ENCODE measurements at regions of chr6 and their contacts with region 1.

Region 1: GRCh38 chr6:39003072-39003471 is 45.5 kb upstream of the GLP1R start:
- DNase-seq: no peak
- H3K4me3 ChIP-seq: no peak overlapping the region
- H3K27ac ChIP-seq: no peak overlapping the region
- H3K4me1 ChIP-seq: no peaks in the 10 kb centered on the region
- H3K27me3 ChIP-seq: no peaks in the 10 kb centered on the region; a peak in 1 of 7 replicates
- CTCF ChIP-seq: peak in 2 of 3 experiments; percentile 72 to 80; a peak in 3 of 4 replicates
- EP300 ChIP-seq: no peak
- POLR2A ChIP-seq: no peak
- RAD21 ChIP-seq: peak; percentile 70 to 83

Region 2: DNA sequence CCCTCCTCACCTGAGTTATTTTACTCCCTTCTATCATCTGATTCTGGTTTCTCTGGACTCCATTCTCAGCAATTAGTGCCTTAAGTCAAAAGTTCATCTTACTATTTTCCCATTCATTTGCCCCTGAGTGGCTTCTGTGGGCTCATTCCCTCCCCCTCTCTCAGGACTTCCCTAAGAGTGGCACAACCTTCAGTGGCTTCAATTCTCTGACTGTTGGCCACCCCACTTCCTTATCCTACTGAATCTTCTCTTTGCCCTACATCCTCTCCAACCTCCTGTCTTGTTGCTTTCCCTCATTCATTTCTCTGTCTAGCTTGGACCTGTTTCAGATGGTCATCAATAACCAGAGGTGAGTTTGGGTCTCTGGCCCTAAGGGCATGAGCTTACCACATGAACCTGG is 15.6 kb before region 1 on chr6:
- CTCF ChIA-PET with region 1: interaction called, 17 read pairs
- POLR2A ChIA-PET with region 1: interaction called, 3 read pairs
- DNase-seq: no peak
- H3K4me3 ChIP-seq: no peak overlapping the region
- H3K27ac ChIP-seq: no peak overlapping the region
- H3K4me1 ChIP-seq: peaks cover under 1 to 7% (median 4%) of the 10 kb centered on the region in 4 experiments; a peak in 6 of 7 replicates
- H3K27me3 ChIP-seq: no peaks in the 10 kb centered on the region; a peak in 2 of 7 replicates
- CTCF ChIP-seq: no peak
- EP300 ChIP-seq: no peak
- POLR2A ChIP-seq: no peak
- RAD21 ChIP-seq: no peak

Region 3: DNA sequence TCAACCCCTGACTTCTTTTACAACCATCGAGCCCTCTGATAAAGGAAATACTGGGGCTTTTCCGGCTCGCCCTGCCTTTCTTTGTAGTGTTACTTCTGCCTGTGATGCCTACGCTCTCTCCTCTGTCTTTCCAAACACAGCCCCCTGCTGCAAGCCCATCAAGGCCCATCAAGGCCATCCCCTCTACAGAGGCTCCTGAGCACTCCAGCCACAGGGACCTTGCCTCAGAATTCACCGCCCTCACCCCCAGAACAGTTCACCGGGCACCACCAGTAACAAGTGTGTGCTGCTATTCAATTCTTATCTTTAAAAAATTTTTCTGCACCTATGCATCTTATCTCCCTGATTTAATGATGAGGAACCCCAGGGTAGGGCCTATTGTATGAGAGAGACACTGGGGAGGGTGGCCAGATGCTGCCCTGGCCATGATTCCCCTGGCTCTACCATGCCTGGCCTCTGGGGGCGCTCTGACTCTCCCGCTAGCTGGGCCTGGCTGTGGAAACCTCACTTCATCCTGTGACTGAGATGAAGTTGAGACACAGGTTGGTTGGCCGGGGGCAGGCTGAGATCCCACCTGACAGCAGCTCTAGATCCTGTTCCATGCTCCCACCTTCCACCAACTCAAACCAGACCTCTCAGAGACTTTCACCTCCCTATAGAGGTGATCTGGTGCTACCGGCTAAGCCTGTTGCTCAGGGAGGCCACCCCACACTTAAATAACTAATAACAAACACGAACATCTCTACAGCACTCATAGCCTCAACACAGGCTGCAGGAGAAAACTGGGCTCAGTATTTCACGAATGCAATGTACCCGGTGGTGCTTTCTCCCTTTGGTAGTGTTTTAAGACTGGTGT is 26.3 kb after region 1 on chr6:
- CTCF ChIA-PET with region 1: interaction called, 24 read pairs
- POLR2A ChIA-PET with region 1: interaction called, 3 read pairs
- DNase-seq: peak in 1 of 2 experiments; percentile 93
- H3K4me3 ChIP-seq: no peak overlapping the region
- H3K27ac ChIP-seq: no peak overlapping the region
- H3K4me1 ChIP-seq: peaks cover 0 to 4% (median 0%) of the 10 kb centered on the region in 4 experiments; a peak in 1 of 7 replicates
- H3K27me3 ChIP-seq: no peaks in the 10 kb centered on the region; a peak in 1 of 7 replicates
- CTCF ChIP-seq: peak; percentile 81 to 97 (median 97)
- EP300 ChIP-seq: no peak
- POLR2A ChIP-seq: no peak
- RAD21 ChIP-seq: peak; percentile 70 to 79

Region 4: GRCh38 chr6:39048481-39049399 is 45.7 kb after region 1 on chr6 and contains the start of gene GLP1R:
- CTCF ChIA-PET with region 1: interaction called, 20 read pairs
- POLR2A ChIA-PET with region 1: no interaction called
- DNase-seq: peak in 1 of 2 experiments; percentile 82
- H3K4me3 ChIP-seq: peak within 1 kb of the TSS; percentile 65 to 85 (median 72)
- H3K27ac ChIP-seq: no peak within 1 kb of the TSS
- H3K4me1 ChIP-seq: peaks cover 0 to 6% (median 4%) of the 10 kb centered on the region in 4 experiments; a peak in 5 of 7 replicates
- H3K27me3 ChIP-seq: peaks cover 3 to 39% (median 33%) of the 10 kb centered on the region in 4 experiments
- CTCF ChIP-seq: no peak
- EP300 ChIP-seq: no peak
- POLR2A ChIP-seq: no peak
- RAD21 ChIP-seq: no peak
- total RNA-seq, gene GLP1R: 2.6 and 3.0 TPM in 2 replicates

Region 5: DNA sequence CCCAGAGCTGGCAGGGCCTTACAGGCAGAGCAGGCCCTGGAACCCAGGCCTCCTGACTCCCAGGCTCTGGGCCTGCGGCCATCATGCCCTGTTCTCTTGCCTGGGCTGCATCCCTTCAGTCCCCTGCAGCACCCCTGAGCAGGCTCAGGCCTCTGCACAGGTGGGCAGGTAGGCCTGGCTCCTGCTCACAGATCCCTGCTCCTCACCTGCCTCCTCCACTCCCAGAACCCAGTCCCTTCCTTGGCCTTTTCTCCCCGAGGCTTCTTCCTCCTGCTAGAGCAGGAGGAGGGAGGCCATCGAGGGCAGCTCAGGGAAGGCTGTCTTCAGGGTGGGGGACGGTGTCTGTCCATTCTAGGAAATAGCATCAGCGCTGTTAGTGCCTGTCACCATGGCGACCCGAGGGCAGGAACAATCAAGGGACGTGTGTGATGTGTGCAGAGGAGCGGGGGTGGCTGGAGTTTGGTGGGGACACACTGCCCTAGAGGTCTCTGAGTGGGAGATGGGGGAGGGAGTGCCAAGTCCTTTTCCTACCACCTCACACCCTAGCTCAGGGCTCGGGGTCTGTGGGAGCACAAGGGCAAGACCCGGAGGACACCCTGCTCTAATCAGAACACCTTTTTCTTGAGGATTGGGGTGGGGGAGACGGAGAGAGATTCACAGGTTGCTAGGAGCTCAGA is 72.1 kb after region 1 on chr6:
- CTCF ChIA-PET with region 1: interaction called, 11 read pairs
- POLR2A ChIA-PET with region 1: no interaction called
- DNase-seq: no peak
- H3K4me3 ChIP-seq: no peak overlapping the region
- H3K27ac ChIP-seq: no peak overlapping the region
- H3K4me1 ChIP-seq: peaks cover 0 to 10% (median 0%) of the 10 kb centered on the region in 4 experiments; a peak in 3 of 7 replicates
- H3K27me3 ChIP-seq: 0 out of 7 replicates have a peak, but pooled peaks cover 0 to 5% (median 0%) of the 10 kb centered on the region in 4 experiments
- CTCF ChIP-seq: no peak
- EP300 ChIP-seq: no peak
- POLR2A ChIP-seq: no peak
- RAD21 ChIP-seq: no peak

Region 6: DNA sequence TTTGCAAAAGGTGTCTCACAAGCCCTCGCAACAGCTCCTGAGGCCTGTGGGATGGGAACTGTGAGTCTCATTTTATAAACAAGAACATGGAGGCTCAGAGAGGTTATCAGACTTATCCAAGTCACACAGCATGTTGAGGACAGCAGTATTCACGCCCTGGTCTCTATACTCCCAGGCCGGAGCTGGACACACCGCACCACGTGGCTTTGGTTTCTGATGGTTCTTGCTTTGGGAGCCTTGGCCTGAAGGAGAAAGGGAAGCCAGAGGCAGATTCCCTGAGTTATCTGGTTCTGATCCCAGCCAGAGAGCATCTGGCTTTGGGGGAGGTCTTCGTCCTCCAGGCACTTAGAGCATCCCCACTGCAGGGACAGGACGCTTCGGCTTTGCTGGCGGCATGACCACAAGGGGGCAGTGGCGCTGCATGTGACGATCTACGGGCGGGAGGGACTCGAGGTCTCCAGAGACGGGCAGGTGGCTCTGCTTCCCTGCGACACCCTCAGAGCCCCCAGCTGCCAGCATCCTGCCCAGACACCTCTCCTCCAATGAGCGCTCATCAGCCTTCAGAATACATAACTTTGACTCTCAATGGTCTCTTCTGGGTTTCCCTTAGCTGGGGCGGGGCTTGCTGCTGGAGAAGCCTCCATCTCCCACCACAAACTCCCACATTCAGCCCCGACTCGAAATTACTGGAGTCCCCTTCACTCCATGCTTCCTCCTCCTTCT is 163.3 kb after region 1 on chr6:
- CTCF ChIA-PET with region 1: interaction called, 27 read pairs
- POLR2A ChIA-PET with region 1: no interaction called
- DNase-seq: peak; percentile 79 to 99
- H3K4me3 ChIP-seq: no peak overlapping the region
- H3K27ac ChIP-seq: no peak overlapping the region
- H3K4me1 ChIP-seq: no peaks in the 10 kb centered on the region
- H3K27me3 ChIP-seq: no peaks in the 10 kb centered on the region
- CTCF ChIP-seq: peak; percentile 98 to 100 (median 98)
- EP300 ChIP-seq: no peak
- POLR2A ChIP-seq: no peak
- RAD21 ChIP-seq: peak; percentile 99 to 100

Region 7: DNA sequence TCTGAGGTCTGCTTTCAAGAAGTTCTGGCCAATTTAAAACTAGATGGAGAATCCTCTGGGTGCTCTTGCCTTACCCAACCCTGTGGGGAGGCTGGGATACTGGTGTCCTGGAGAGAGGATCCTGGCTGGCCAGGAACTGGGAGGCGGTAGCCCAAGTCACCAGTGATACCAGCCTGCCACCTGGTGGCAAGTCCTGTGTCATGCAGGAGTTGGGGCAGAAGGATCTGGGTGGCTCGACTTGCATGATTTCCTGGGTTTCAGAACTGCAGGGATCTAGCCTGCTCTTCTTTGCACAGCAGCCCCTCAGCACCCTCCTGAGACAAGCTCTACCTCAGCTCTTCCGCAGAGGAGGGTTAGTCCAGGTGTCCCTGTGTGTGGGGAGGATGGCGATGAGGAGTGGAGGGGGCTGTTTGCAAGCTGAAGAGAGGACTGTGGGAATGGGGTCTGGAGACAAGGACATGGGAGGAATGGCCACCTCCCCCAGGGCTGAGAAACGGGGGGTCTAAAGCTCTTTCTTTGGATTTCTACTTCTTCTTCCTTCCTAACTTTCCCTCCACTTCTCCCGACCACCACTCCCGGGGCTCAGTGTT is 307.0 kb after region 1 on chr6:
- CTCF ChIA-PET with region 1: interaction called, 26 read pairs
- POLR2A ChIA-PET with region 1: no interaction called
- DNase-seq: peak; percentile 53 to 92
- H3K4me3 ChIP-seq: no peak overlapping the region
- H3K27ac ChIP-seq: no peak overlapping the region
- H3K4me1 ChIP-seq: peaks cover 0 to 5% (median 3%) of the 10 kb centered on the region in 4 experiments; a peak in 4 of 7 replicates
- H3K27me3 ChIP-seq: peaks cover 21 to 43% (median 38%) of the 10 kb centered on the region in 4 experiments
- CTCF ChIP-seq: peak in 2 of 3 experiments; percentile 97 to 99; a peak in 3 of 4 replicates
- EP300 ChIP-seq: no peak
- POLR2A ChIP-seq: no peak
- RAD21 ChIP-seq: peak; percentile 99 to 100

Measured in H1 (cell line).